ENCODE measurements at regions of chr9 and their contacts with region 1.

Region 1: DNA sequence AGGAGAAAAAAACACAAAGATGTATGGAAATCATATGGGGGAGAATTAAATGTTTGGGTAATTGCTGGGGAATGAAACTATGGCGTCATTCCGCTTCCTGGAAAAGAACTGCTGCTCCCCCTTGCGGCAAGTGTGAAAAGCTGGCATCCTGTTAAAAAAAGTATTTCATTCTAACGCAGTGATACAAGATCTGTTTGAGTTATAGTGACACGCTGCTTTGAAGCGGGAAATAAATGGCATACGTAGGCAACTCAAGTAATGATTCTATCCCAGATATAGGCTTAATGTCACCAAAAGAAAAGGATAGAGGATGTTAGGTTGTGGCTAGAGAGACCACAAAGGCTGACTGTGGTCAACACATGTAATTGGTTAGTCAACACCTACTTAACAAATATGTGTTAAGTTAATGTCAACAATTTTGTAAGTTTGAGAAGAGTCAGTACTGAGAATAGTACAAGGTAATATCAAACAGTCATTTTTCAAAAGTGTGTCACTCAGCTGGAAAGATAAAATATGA is 70.2 kb upstream of the ALDH1A1 start:
- DNase-seq: peak in 2 of 4 experiments; percentile 15 to 72
- ATAC-seq: no peak
- H3K4me3 ChIP-seq: no peak overlapping the region
- H3K27ac ChIP-seq: peak overlapping the region; percentile 74; the same call in 1 of the 3 replicates
- H3K4me1 ChIP-seq: peaks cover 8 to 24% of the 10 kb centered on the region in 2 experiments; a peak in 3 of 5 replicates
- H3K27me3 ChIP-seq: no peaks in the 10 kb centered on the region
- CTCF ChIP-seq: peak; percentile 50 to 58 (median 55)
- EP300 ChIP-seq: no peak
- POLR2A ChIP-seq: no peak
- RAD21 ChIP-seq: peak; percentile 44 to 73

Region 2: DNA sequence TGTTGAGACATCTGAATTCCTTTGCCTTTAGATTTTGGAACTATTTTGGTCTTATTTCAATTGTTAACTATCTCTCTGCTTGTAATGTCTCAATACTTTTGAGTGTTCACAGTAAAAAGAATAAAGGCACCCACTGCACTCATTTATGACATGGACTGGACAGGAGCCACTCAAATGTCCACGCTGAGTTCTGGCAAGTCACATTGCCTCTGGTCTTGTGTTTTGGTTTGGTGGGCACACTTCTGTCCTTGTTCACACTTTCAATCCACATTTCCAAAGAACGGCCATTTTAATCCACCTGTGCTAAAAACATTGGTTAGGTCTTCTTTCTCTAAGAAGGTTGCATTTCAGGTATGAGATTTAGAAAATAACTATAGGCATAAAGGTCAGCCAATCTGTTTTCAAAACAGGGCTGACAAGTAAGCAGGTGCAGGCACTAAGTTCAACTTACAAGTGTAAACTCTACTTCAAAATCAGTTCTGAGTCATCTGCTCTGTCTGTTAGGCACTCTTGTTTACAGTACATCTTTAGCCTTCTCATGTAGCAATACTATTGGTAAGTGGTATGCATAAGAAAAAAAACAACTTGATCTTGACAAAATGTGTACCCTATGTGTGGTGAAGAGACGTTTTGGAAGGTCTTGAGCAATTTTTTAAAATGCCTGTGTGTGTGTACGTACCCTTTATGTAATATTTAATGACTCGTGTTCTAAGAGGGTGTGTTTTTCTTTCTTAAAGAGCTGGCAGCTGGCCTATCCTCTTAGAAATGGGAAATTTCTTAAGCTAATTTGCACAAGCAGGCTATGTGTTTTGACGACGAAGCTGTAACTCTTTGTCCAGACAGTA is 626.6 kb before region 1 on chr9:
- CTCF ChIA-PET with region 1: no interaction called
- POLR2A ChIA-PET with region 1: no interaction called
- in situ Hi-C with region 1: no loop called
- intact Hi-C with region 1: no loop called
- DNase-seq: no peak
- ATAC-seq: no peak
- H3K4me3 ChIP-seq: no peak overlapping the region
- H3K27ac ChIP-seq: no peak overlapping the region
- H3K4me1 ChIP-seq: no peaks in the 10 kb centered on the region
- H3K27me3 ChIP-seq: no peaks in the 10 kb centered on the region; a peak in 2 of 5 replicates
- CTCF ChIP-seq: no peak
- EP300 ChIP-seq: no peak
- POLR2A ChIP-seq: no peak
- RAD21 ChIP-seq: no peak

Region 3: GRCh38 chr9:72952914-72953313 is 70.2 kb before region 1 on chr9 and contains the start of gene ALDH1A1:
- CTCF ChIA-PET with region 1: no interaction called
- POLR2A ChIA-PET with region 1: no interaction called
- in situ Hi-C with region 1: no loop called
- intact Hi-C with region 1: loop called (anchors 5 kb)
- DNase-seq: peak in 2 of 4 experiments; percentile 13 to 36
- ATAC-seq: peak; percentile 59
- H3K4me3 ChIP-seq: peak within 1 kb of the TSS; percentile 16
- H3K27ac ChIP-seq: peak within 1 kb of the TSS; percentile 8; the same call in 1 of the 3 replicates
- H3K4me1 ChIP-seq: peaks cover 0 to 3% of the 10 kb centered on the region in 2 experiments; a peak in 2 of 5 replicates
- H3K27me3 ChIP-seq: no peaks in the 10 kb centered on the region
- CTCF ChIP-seq: no peak
- EP300 ChIP-seq: no peak
- POLR2A ChIP-seq: no peak
- RAD21 ChIP-seq: no peak
- polyA plus RNA-seq, gene ALDH1A1: 24.4 to 33.0 TPM

Region 4: DNA sequence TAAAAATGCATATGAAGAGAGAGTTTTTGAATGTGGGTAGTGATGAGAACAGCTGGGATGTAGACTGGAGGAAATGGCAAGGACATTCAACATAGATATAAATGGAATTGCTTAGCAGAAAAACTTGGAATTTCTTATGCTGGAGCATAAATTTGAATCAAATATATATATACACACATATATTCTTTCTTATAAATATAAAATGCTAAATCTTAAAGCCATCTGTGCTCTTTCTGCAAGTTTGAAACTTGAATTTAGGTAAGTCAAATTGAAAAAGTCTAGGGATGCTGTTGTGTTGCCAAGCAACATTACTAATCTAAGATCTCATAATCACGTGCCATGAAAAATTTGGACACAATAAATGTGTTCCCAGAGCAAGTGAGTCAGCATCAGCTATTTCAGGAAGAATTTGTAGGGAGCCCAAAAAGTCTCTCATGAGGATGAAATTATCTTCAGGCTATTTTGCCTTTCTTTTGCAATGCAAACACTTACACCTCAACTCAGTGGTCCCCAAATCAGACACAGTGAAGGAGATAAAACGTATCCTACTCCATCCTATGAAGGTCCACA is 11.8 kb before region 1 on chr9:
- CTCF ChIA-PET with region 1: no interaction called
- POLR2A ChIA-PET with region 1: no interaction called
- in situ Hi-C with region 1: no loop called
- intact Hi-C with region 1: loop called (anchors 2 kb)
- DNase-seq: no peak
- ATAC-seq: no peak
- H3K4me3 ChIP-seq: no peak overlapping the region
- H3K27ac ChIP-seq: no peak overlapping the region
- H3K4me1 ChIP-seq: peaks cover 0 to 12% of the 10 kb centered on the region in 2 experiments; a peak in 2 of 5 replicates
- H3K27me3 ChIP-seq: no peaks in the 10 kb centered on the region
- CTCF ChIP-seq: no peak
- EP300 ChIP-seq: no peak
- POLR2A ChIP-seq: no peak
- RAD21 ChIP-seq: no peak

Region 5: DNA sequence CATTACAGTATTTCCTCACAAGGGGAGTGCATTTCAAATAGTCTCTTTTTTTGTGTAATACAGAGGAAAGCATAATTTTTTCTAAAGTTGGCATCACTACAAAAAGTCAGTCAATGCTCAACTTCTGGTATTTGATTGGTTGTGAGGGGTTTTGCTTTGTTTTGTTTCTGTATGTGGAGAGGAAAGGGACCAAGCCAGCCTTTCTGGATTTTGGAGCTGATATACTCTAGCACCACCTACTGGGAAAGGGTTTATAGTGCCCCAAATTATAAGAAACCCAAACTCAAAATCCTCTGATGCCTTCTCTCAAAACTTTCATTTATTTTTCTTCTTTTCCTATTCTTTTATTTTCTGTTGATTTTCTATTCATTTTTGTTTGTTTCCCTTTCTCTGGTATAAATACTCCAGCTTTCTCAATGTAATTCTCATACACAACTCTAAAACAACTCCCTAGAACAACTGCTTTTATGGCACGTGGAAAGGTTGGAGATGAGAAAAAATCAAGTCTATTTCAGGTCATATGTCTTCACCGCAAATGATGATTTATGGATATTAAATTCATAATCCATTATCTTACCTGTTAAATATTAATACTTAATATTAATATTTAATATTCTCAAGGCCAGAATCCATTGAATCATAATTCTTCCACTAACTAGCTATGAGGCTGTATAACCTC is 59.0 kb after region 1 on chr9:
- CTCF ChIA-PET with region 1: no interaction called
- POLR2A ChIA-PET with region 1: no interaction called
- in situ Hi-C with region 1: no loop called
- intact Hi-C with region 1: loop called (anchors 2 kb)
- DNase-seq: peak; percentile 13 to 64 (median 33)
- ATAC-seq: peak; percentile 70; the same call in 2 of the 3 replicates
- H3K4me3 ChIP-seq: no peak overlapping the region
- H3K27ac ChIP-seq: no peak overlapping the region
- H3K4me1 ChIP-seq: no peaks in the 10 kb centered on the region; a peak in 1 of 5 replicates
- H3K27me3 ChIP-seq: no peaks in the 10 kb centered on the region
- CTCF ChIP-seq: peak; percentile 54 to 77 (median 66)
- EP300 ChIP-seq: no peak
- POLR2A ChIP-seq: no peak
- RAD21 ChIP-seq: peak; percentile 86 to 87

Region 6: DNA sequence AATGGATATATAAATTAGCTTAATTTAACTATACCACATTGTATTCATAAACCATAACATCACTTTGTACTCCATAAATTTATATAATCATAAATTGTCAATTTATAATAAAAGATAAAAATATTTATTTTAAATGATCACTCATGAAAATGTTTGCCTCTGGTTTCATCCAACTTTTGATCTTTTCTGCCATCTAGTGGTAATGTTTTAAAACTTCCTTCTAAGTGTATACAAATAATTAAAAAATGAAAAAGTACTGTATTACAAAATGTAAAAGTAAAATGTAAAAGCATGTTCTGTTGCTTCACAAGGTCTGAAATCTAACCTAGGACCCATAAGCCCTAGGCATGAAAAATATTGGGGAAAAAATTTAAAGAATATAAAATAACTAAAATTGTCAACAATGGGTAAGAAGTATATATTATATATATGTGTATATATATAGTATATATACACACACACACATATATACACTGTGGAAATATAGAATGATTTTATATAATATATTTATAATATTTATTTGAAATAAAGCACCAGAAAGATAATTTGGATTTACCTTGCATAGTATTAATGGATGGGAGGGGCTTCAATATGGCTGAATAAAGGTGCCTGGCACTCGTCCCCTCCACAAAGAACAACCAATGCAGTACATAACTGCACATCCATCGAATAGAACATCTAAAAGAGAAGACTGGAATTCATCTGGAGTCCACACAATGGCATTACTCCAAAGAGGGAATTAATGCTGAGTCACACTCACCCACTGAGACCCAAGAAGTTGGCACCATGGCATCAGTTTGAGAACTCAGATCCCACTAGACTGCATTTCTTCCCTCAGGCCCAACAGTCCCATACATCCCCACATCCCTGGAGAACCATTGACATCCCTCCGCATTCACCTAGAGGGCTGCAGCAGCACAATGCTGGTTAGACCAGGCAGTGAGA is 161.1 kb after region 1 on chr9:
- CTCF ChIA-PET with region 1: no interaction called
- POLR2A ChIA-PET with region 1: interaction called, 3 read pairs
- in situ Hi-C with region 1: no loop called
- intact Hi-C with region 1: loop called (anchors 5 kb)
- DNase-seq: peak in 3 of 4 experiments; percentile 10 to 38 (median 11)
- ATAC-seq: 0 out of 3 replicates have a peak, but pooled peaks have one; percentile 48
- H3K4me3 ChIP-seq: no peak overlapping the region
- H3K27ac ChIP-seq: no peak overlapping the region; the same call in 2 of the 3 replicates
- H3K4me1 ChIP-seq: no peaks in the 10 kb centered on the region
- H3K27me3 ChIP-seq: no peaks in the 10 kb centered on the region
- CTCF ChIP-seq: peak in 2 of 3 experiments; percentile 14 to 57; a peak in 3 of 6 replicates
- EP300 ChIP-seq: no peak
- POLR2A ChIP-seq: no peak
- RAD21 ChIP-seq: peak; percentile 74

Measured in K562 (cell line).